Posterior vena cava (tissue), 2 donors: ENCODE measurements at regions of chr14 and their contacts with region 1.

Region 1: GRCh38 chr14:51939727-51940390 is 49.5 kb upstream of the RTRAF start:
- DNase-seq: no peak

Region 2: GRCh38 chr14:53217295-53217994 is 1277.6 kb after region 1 on chr14:
- intact Hi-C with region 1: loop called in 1 of 2 experiments (anchors 10 kb)
- DNase-seq: peak; percentile 92